GM10248 (cell line): ENCODE measurements at regions of chr9 and their contacts with region 1.

Region 1: DNA sequence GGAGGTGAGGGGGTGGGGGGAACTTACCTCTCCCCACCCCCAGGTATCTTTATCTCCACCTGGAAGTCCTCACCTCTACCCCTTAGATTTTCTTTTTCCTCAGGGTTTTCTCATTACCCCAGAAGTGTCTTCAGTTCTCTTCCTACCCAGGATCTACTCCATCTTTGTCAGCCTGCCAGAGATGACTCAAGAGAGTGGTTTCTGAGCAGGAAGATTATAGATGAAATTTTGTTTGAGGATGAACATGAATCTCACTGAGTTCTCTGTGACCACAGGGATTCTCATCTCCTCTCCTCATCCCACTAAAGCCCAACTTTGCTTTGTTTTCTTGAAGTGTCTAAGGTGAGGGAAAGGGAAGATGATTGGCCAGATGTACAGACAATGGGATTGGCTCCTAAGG is 5.2 kb upstream of the HINT2 start:
- DNase-seq: no peak
- CTCF ChIP-seq: no peak

Region 2: DNA sequence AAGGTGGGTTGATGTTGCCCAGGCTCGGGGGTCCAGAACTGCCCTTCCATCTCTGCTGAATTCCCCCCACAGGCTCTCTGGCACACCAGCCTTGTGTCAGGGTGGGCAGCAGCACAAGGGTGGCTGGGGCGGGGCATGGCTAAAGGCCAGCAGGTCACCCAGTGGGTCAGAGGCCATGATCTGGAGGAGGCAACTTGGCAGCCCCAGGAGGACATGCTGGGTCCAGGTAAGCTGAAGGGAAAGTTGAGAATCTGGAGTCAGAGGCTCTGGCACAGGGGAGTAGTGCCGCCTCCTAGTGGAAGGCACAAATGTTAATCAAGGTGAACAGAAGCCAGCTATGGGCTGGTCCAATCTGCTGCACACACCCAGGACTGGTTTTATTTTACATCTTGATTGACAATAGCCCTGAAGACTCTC is 15.1 kb after region 1 on chr9:
- CTCF ChIA-PET with region 1: interaction called, 44 read pairs
- POLR2A ChIA-PET with region 1: no interaction called
- DNase-seq: no peak
- CTCF ChIP-seq: peak; percentile 13